WTC11 (cell line): ENCODE measurements at regions of chr11 and their contacts with region 1.

Region 1: GRCh38 chr11:64688534-64688982 is 34.4 kb downstream of the NRXN2 start:
- DNase-seq: peak; percentile 98
- ATAC-seq: peak; percentile 88
- H3K4me3 Mint-ChIP-seq: peak overlapping the region; percentile 87
- H3K27ac Mint-ChIP-seq: peak overlapping the region; percentile 39; the same call in 1 of the 2 replicates
- H3K4me1 Mint-ChIP-seq: peaks cover 27% of the 10 kb centered on the region
- H3K27me3 Mint-ChIP-seq: peaks cover 41% of the 10 kb centered on the region
- CTCF ChIP-seq: peak; percentile 93

Region 2: DNA sequence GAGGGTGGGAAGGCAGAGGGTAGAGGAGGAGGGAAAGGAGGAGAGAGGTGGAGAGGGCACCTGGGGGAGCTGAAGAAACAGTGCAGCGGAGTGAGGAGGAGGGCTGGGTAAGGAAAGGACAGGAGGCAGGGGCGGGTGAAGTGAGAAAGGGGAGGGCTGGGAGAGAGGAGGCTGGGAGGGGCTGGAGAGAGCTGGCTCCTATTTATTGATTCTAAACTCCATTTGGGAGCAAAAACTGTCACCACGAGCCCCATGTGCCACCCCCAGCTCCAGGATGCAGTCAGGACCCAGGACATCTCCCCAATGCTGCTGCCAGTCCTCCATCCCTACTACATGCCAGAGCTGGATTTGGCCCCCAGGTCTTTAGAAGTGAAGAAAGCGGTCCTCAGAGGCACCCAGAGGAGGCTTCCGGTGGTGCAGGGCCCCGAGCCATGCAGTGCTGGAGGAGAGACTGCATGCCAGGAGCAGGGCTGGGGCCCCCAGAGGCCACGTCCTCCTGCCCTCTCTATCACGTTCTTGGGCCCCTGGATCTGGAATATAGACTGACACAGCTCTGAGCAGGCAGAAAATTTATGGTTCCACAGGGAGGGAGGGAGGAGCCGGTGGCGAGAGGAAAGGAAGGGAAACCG is 43.8 kb before region 1 on chr11:
- CTCF ChIA-PET with region 1: interaction called, 22 read pairs
- POLR2A ChIA-PET with region 1: no interaction called
- DNase-seq: peak; percentile 51
- ATAC-seq: peak; percentile 53
- H3K4me3 Mint-ChIP-seq: peak overlapping the region; percentile 80
- H3K27ac Mint-ChIP-seq: no peak overlapping the region
- H3K4me1 Mint-ChIP-seq: peaks cover 25% of the 10 kb centered on the region
- H3K27me3 Mint-ChIP-seq: peaks cover 44% of the 10 kb centered on the region
- CTCF ChIP-seq: no peak

Region 3: GRCh38 chr11:64675450-64676260 is 12.9 kb before region 1 on chr11:
- CTCF ChIA-PET with region 1: interaction called, 31 read pairs
- POLR2A ChIA-PET with region 1: no interaction called
- DNase-seq: no peak
- ATAC-seq: no peak
- H3K4me3 Mint-ChIP-seq: no peak overlapping the region
- H3K27ac Mint-ChIP-seq: no peak overlapping the region
- H3K4me1 Mint-ChIP-seq: no peaks in the 10 kb centered on the region
- H3K27me3 Mint-ChIP-seq: peaks cover 65% of the 10 kb centered on the region
- CTCF ChIP-seq: no peak

Region 4: GRCh38 chr11:64723117-64723906 is 34.8 kb after region 1 on chr11 and contains the start of gene NRXN2:
- CTCF ChIA-PET with region 1: interaction called, 56 read pairs
- POLR2A ChIA-PET with region 1: no interaction called
- DNase-seq: peak; percentile 87
- ATAC-seq: peak; percentile 88
- H3K4me3 Mint-ChIP-seq: peak within 1 kb of the TSS; percentile 50
- H3K27ac Mint-ChIP-seq: no peak within 1 kb of the TSS
- H3K4me1 Mint-ChIP-seq: peaks cover 44% of the 10 kb centered on the region
- H3K27me3 Mint-ChIP-seq: peaks cover 47% of the 10 kb centered on the region
- CTCF ChIP-seq: peak; percentile 93
- total RNA-seq, gene NRXN2: 8.0 to 10.4 TPM (median 8.6 TPM) in 3 replicates

Region 5: DNA sequence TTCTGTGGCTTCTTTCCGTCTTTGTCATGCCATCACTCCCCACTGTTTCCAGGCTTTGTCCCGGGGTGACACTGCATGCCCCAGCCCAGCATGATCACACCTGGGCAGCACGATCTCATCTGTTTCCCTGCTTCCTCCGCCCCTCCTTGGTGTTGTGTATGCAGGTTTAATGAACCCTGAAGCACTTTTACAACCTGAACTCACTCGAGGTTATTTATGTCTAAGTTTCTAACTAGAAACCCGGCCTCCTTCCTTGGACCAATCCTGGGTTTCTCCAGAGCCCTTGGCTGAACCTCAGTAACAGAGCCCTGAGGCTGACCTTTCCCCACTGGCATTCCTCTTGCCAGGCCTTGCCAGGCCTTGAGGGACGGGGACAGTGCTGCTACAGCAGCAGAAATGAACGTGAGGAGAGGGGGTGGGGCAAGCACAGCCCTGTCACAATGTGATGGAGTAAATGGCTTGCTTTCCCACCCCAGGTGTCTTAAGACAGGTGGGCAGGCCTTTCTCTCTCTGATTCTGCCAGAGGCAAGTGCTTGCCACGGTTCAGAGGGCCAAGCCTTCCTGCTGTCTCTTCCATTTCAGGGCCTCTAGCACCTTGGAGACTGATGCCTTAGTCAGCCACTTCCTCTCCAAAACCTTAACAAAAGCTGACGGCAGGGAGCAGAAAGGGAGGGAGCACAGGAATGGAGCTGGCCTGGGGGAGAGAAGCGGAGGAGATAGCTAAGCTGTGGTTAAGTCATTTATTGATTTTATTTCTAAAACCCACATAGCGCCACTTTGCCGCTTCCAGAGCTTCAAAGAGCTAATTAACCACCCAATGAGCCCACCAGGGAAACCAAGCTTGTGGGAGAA is 74.3 kb after region 1 on chr11:
- CTCF ChIA-PET with region 1: interaction called, 15 read pairs
- POLR2A ChIA-PET with region 1: no interaction called
- DNase-seq: peak; percentile 53
- ATAC-seq: peak; percentile 18
- H3K4me3 Mint-ChIP-seq: peak overlapping the region; percentile 43
- H3K27ac Mint-ChIP-seq: peak overlapping the region; percentile 98
- H3K4me1 Mint-ChIP-seq: peaks cover 88% of the 10 kb centered on the region
- H3K27me3 Mint-ChIP-seq: no peaks in the 10 kb centered on the region
- CTCF ChIP-seq: no peak